OCI-LY7 (cell line): ENCODE measurements at regions of chr4 and their contacts with region 1.

Region 1: GRCh38 chr4:8176547-8177399 is 18.2 kb upstream of the ABLIM2 start:
- DNase-seq: peak; percentile 71
- H3K4me3 ChIP-seq: no peak overlapping the region
- H3K27ac ChIP-seq: no peak overlapping the region
- H3K4me1 ChIP-seq: no peaks in the 10 kb centered on the region
- CTCF ChIP-seq: peak; percentile 86

Region 2: DNA sequence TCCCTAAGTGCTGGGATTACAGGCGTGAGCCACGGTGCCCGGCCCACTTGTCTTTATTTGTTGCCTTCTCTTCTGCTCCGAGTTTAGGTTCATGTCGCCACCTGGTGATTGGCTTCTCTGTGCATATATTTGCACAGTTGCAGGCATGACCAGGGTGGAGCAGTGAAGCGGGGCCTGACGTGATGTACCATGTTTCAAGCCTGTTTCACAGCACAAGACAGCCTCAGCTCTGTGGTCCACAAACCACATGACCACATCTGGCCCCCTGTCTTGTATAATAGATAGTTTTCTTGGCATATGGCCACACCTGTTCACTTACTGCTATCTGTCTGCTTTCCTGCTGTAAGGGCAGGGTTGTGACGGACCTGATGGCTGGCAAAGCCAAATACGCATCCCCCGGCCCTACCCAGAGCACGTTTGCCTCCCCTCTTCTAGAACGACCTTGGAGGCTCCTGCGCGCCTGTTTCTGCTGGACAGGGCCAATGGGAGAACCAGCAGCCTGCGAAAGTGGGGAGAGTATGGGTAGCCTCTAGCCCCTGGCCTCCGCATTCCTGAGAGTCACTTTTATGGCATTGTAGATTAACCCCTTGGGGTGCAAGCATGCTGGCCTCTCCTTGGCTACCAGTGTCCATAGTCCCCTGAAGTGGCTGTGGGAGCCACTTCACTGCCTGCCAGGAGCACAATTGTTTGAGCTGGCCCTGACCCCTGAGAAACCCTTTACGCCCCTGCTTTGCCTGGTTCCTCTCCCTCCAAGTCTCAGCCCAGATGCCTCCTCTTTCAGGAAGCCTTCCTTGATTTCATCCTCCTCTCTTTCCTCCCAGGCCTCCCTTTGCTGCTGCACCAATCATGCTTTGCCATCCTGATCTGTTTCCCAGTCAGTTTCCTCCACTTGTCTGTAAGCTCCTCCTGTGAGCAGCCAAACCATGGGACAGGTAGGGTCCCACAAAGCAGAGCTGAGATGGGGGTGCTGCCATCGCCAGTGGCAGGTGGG is 16.3 kb after region 1 on chr4:
- CTCF ChIA-PET with region 1: interaction called, 17 read pairs
- POLR2A ChIA-PET with region 1: interaction called, 8 read pairs
- intact Hi-C with region 1: loop called (anchors 1 kb)
- DNase-seq: peak; percentile 70
- H3K4me3 ChIP-seq: no peak overlapping the region
- H3K27ac ChIP-seq: no peak overlapping the region
- H3K4me1 ChIP-seq: peaks cover 5% of the 10 kb centered on the region
- CTCF ChIP-seq: peak; percentile 65

Region 3: GRCh38 chr4:8198906-8199593 is 22.3 kb after region 1 on chr4 and contains the start of gene SH3TC1:
- CTCF ChIA-PET with region 1: interaction called, 17 read pairs
- POLR2A ChIA-PET with region 1: interaction called, 8 read pairs
- intact Hi-C with region 1: no loop called
- DNase-seq: peak; percentile 82
- H3K4me3 ChIP-seq: peak within 1 kb of the TSS; percentile 67
- H3K27ac ChIP-seq: peak within 1 kb of the TSS; percentile 51
- H3K4me1 ChIP-seq: peaks cover 53% of the 10 kb centered on the region
- CTCF ChIP-seq: no peak
- total RNA-seq, gene SH3TC1: 15.3 and 17.5 TPM in 2 replicates

Region 4: DNA sequence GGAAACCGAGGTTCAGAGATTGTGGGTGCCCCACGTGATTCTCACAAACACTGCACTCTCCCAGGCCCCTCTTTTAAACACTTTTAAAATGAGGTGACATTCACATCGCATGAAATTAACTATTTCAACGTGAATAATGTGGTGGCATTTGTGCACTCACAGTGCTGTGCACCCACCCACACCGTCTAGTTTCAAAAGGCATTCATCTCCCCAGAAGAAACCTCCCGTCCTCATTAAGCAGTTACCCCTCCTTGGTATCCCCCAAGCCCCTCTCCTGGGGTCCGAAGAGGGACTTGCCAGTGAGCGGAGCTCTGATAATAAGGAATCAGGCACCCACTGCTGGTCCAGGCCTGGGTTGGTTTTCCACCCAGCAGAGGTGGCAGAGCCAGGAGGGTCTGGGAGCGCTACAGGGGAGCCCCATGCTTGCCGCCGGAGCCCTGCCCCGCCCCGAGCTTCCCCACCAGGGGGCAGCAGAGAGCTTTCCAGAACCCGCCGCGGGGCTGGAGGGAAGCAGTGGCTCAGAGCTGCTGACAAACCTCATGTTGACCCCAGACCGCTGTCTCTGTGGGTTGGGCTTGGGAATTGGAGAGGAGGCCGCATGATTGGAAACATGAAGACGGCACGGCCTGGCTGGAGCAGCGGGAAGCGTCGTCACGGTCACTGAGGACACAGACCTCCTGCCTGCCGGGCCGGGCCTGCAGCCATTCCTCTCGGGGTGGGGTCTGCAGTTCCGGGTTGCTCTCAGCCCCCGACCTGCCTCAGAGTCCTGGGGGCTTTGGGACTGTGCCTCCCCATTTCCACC is 65.3 kb after region 1 on chr4:
- CTCF ChIA-PET with region 1: interaction called, 3 read pairs
- POLR2A ChIA-PET with region 1: no interaction called
- intact Hi-C with region 1: loop called (anchors 1 kb)
- DNase-seq: peak; percentile 77
- H3K4me3 ChIP-seq: no peak overlapping the region
- H3K27ac ChIP-seq: no peak overlapping the region
- H3K4me1 ChIP-seq: peaks cover 10% of the 10 kb centered on the region
- CTCF ChIP-seq: peak; percentile 89

Region 5: DNA sequence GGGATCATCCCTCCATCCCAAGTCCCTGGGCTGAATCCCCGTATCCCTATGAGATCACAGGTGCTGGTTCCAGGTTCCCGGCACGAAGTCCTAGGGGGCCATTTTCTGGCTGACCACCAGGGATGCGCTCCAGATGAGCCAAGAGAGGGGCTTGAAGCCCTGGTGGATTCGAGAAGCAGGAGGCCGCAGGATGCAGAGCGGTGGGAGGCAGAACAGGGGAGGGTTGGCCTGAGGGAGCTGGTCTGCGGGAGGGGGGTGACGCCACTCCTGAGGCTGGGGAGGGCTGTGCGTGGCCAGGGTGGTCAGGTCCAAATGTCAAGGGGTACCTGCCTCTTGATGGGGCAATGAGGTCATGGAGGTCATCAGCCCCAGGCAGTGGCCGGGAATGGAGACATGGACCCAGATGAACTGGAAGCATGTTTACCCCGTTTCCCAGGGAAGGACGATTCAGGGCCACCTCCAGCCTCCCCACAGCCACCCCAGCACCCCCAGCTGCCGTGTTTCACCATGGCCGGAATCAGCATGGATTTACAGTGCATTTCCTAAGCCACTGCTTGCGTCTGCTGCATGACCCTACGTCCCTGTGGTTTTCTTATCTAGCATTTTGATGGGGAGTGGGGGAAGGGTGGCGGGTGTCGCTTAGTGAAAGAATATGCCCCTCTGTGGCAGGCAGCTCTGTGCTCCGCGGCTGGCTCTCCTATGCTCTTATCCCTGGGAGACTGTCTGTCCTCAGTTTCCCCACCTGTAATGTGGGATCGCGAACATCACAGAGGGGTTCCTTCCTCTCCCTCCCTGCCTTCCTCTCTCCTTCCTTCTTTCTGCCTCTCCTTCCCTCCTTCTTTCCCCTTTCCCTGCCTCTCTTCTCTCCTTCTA is 75.8 kb after region 1 on chr4:
- CTCF ChIA-PET with region 1: no interaction called
- POLR2A ChIA-PET with region 1: no interaction called
- intact Hi-C with region 1: no loop called
- DNase-seq: no peak
- H3K4me3 ChIP-seq: no peak overlapping the region
- H3K27ac ChIP-seq: no peak overlapping the region
- H3K4me1 ChIP-seq: no peaks in the 10 kb centered on the region
- CTCF ChIP-seq: no peak

Region 6: GRCh38 chr4:8315435-8316250 is 138.9 kb after region 1 on chr4:
- CTCF ChIA-PET with region 1: no interaction called
- POLR2A ChIA-PET with region 1: no interaction called
- intact Hi-C with region 1: no loop called
- DNase-seq: peak; percentile 66
- H3K4me3 ChIP-seq: no peak overlapping the region
- H3K27ac ChIP-seq: no peak overlapping the region
- H3K4me1 ChIP-seq: peaks cover 31% of the 10 kb centered on the region
- CTCF ChIP-seq: no peak